Activated CD8-positive, alpha-beta T cell treated with anti-CD3 and anti-CD28 coated beads for 36 hours (primary cell): ENCODE measurements at regions of chr2 and their contacts with region 1.

Region 1: DNA sequence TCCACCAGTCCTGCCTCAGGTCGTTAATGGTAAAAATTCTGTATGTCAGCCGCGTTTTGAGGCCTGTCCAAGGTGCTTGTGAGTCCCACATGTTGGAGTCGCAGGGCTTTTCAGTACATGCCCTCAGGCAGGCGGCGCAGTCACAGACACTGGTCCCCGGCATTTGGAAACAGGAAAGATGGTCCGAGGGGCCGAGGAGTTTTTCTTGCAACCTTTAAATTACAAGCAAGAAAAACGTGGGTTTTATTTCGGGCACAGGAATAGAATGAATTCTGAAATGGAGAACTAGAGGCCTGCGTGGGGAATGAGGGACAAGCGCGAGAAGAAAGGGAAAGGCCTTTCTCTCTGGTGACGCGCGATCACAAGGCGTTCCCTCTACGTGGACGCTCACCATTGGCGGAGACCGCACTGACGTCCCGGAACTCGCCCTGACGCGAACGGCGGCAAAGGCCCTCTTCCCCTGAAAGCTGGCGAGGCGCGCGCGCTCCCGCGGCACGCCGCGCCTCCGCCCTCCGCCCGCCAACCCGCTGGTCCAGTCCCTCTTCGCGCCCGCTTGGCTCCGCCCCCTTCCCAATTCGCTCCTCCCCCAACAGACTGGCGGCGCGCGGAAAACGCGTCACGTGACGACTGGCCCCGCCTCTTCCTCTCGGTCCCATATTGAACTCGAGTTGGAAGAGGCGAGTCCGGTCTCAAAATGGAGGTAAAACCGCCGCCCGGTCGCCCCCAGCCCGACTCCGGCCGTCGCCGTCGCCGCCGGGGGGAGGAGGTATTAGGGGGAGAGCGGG is at the start of gene HNRNPA3:
- DNase-seq: peak; percentile 99
- ATAC-seq: peak; percentile 86
- H3K4me3 Mint-ChIP-seq: peak within 1 kb of the TSS; percentile 88
- H3K27ac Mint-ChIP-seq: peak within 1 kb of the TSS; percentile 98
- H3K4me1 Mint-ChIP-seq: peaks cover 34% of the 10 kb centered on the region
- H3K27me3 Mint-ChIP-seq: no peaks in the 10 kb centered on the region
- CTCF ChIP-seq: no peak
- total RNA-seq, gene HNRNPA3: 292 to 308 TPM

Region 2: GRCh38 chr2:176063958-176064357 is 1148.3 kb before region 1 on chr2:
- CTCF ChIA-PET with region 1: no interaction called
- POLR2A ChIA-PET with region 1: no interaction called
- intact Hi-C with region 1: no loop called
- DNase-seq: no peak
- ATAC-seq: no peak
- H3K4me3 Mint-ChIP-seq: no peak overlapping the region
- H3K27ac Mint-ChIP-seq: no peak overlapping the region
- H3K4me1 Mint-ChIP-seq: peaks cover 8% of the 10 kb centered on the region
- H3K27me3 Mint-ChIP-seq: peaks cover 52% of the 10 kb centered on the region
- CTCF ChIP-seq: no peak

Region 3: DNA sequence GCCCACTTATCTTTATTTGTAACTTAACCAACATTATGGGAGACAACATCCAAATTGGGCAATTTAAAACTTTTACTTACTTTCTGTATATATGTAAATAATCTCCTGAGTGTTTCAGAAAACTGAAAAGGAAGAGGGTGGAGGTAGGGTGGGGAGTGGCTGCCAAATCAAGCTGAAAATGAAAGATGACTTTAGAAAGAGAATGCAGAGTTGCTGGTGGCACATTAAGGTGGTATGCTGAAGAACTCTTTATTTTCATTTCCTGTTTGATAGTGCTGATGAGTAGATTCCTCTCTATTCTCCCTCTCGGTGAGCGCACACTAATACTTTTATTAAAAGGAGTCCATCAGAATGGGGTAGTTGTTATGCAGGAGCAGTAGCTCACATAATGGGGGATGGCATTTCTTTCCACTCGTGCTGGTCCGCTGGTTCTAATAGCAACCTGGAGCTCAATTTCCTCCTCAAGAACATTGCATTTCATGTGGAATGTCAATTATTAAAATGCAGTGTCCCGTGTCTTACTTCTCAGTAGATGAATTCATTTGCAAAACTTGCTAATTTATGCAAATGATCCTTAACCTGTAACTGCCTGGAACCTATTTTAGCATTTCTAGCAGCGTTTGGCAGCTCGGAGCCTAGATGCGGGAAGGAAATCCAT is 466.6 kb before region 1 on chr2:
- CTCF ChIA-PET with region 1: no interaction called
- POLR2A ChIA-PET with region 1: no interaction called
- intact Hi-C with region 1: no loop called
- DNase-seq: no peak
- ATAC-seq: no peak
- H3K4me3 Mint-ChIP-seq: no peak overlapping the region
- H3K27ac Mint-ChIP-seq: no peak overlapping the region
- H3K4me1 Mint-ChIP-seq: peaks cover 8% of the 10 kb centered on the region
- H3K27me3 Mint-ChIP-seq: peaks cover 4% of the 10 kb centered on the region
- CTCF ChIP-seq: no peak

Region 4: GRCh38 chr2:177229448-177230242 is 17.3 kb after region 1 on chr2:
- CTCF ChIA-PET with region 1: interaction called, 10 read pairs
- POLR2A ChIA-PET with region 1: interaction called, 20 read pairs
- intact Hi-C with region 1: no loop called
- DNase-seq: no peak
- ATAC-seq: peak; percentile 40
- H3K4me3 Mint-ChIP-seq: no peak overlapping the region
- H3K27ac Mint-ChIP-seq: peak overlapping the region; percentile 36
- H3K4me1 Mint-ChIP-seq: peaks cover 39% of the 10 kb centered on the region
- H3K27me3 Mint-ChIP-seq: no peaks in the 10 kb centered on the region
- CTCF ChIP-seq: no peak

Region 5: GRCh38 chr2:177239932-177240630 is 27.8 kb after region 1 on chr2:
- CTCF ChIA-PET with region 1: no interaction called
- POLR2A ChIA-PET with region 1: interaction called, 5 read pairs
- intact Hi-C with region 1: loop called (anchors 1 kb)
- DNase-seq: peak; percentile 54
- ATAC-seq: peak; percentile 87
- H3K4me3 Mint-ChIP-seq: no peak overlapping the region
- H3K27ac Mint-ChIP-seq: peak overlapping the region; percentile 87
- H3K4me1 Mint-ChIP-seq: peaks cover 70% of the 10 kb centered on the region
- H3K27me3 Mint-ChIP-seq: no peaks in the 10 kb centered on the region
- CTCF ChIP-seq: no peak

Region 6: DNA sequence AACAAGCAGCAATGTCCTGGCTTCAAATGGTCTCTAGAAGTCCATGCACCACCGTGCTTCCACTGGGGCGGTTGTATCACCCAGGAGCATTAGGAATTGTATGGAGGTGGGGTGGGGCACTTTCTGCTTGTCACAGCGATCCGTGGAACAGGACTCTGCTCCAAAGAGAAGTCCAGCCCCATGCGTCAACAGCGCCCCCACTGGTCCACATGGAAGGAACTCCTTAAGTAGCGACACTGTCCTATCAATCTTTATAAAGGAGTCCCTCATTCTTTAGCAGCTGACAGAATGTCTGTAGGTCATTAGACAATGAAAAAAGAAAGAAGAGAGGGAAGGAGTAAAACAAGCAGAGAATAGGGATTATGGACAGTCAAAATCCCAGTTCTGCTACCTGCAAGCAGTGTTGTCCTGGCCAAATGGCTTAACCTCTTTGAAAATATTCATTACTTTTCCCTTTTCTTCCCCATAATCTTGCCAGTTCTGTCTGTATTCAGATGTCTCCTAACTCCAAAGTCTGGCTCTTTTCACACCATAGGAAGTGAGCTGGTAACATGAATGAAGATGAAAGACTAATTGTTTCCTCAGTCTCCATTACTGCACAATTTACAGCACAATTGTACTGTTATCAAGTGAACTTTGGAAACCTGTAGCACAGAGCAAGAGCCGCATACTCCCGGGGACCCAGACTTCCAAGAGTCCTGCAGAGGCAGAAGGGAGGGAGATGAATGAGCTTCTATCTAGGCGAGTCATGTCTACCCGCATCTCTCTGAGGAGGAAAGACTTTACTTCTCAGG is 42.3 kb after region 1 on chr2:
- CTCF ChIA-PET with region 1: interaction called, 3 read pairs
- POLR2A ChIA-PET with region 1: interaction called, 10 read pairs
- intact Hi-C with region 1: no loop called
- DNase-seq: peak; percentile 41
- ATAC-seq: no peak
- H3K4me3 Mint-ChIP-seq: no peak overlapping the region
- H3K27ac Mint-ChIP-seq: peak overlapping the region; percentile 71
- H3K4me1 Mint-ChIP-seq: peaks cover 93% of the 10 kb centered on the region
- H3K27me3 Mint-ChIP-seq: no peaks in the 10 kb centered on the region
- CTCF ChIP-seq: peak; percentile 49